ENCODE measurements at regions of chr4 and their contacts with region 1.

Region 1: DNA sequence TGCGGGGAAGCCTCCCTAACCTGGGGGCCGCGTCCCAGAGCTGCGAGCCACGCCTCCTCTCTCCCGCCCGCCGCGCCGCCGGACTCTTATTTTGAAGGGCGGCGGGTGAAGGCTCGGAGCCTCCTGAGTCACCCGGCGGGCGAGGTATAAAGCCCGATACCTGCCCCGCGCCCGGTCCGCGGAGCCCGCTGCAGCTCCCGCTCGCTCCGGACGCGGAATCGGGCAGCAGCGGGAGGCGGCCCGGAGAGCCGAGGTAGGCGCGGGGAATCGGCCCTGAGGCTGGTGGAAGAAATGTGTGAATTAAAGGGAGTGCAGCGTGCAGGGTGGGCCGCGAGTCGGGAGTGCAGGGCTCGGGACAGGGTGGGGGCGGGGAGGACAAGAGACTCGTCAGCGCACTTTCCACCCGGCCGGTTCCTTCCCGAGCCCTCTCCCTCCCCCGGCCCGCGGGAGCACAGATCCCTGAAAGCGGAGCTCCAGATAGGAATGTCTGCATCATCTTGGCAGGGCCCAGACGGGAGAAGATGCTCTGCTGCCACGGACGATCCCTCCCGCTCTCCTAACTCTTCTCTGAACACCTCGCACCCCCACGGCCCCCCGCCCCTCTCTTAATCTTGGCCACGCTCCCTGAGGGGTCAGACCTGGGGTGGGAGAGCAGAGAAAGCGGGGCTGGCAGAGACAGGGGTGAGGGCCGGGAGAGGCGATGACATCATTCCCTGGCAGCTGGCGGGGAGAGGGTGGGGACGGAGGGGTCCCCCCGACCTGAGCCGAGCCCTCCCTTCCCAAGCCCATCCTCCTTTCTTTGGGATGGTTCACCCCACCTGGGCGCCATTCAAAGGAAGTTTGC is 177.9 kb downstream of the CBR4 start:
- DNase-seq: peak in 8 of 9 donors; percentile 31 to 77 (median 44)
- ATAC-seq: peak; percentile 85
- H3K4me3 ChIP-seq: peak overlapping the region; percentile 45
- H3K4me3 Mint-ChIP-seq: peak overlapping the region; percentile 63 to 91 (median 84)
- H3K27ac ChIP-seq: no peak overlapping the region
- H3K27ac Mint-ChIP-seq: peak overlapping the region in 1 of 9 donors; percentile 66
- H3K4me1 ChIP-seq: peaks cover 0 to 5% of the 10 kb centered on the region in 2 donors
- H3K4me1 Mint-ChIP-seq: peaks cover 0 to 21% (median 13%) of the 10 kb centered on the region in 7 donors
- H3K27me3 ChIP-seq: peaks cover 0 to 15% of the 10 kb centered on the region in 2 donors
- H3K27me3 Mint-ChIP-seq: peaks cover 46 to 68% (median 60%) of the 10 kb centered on the region in 5 donors

Region 2: DNA sequence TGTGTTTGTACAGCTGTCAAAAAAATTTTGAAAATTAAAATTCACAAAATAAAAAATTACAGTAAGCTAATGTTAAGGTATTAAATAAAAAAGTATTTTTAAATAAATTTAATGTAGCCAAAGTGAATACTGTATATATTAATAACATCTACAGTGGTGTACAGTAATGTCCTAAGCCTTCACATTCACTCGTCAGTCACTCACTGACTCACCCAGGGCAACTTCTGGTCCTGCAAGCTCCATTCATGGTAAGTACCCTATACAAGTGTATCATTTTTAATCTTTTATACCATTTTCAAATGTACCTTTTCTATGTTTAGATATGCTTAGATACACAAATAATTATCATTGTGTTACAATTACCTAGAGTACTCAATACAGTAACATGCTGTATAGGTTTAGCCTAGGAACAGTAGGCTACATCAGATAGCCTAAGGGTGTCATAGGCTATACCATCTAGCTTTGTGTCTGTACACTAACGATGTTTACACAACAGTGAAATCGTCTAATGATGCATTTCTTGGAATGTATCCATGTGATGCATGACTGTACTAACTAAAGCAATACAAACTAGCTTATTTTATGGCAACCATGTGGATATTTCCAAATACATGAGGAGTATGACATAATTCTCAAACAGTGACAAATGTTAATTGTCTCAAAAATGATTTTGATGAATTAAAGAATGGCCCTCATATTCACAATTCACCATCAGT is 527.2 kb before region 1 on chr4:
- CTCF ChIA-PET with region 1: no interaction called
- POLR2A ChIA-PET with region 1: no interaction called
- intact Hi-C with region 1: loop called in 1 of 2 experiments (anchors 5 kb)
- DNase-seq: no peak
- ATAC-seq: no peak
- H3K4me3 ChIP-seq: no peak overlapping the region
- H3K4me3 Mint-ChIP-seq: no peak overlapping the region
- H3K27ac ChIP-seq: no peak overlapping the region
- H3K27ac Mint-ChIP-seq: no peak overlapping the region
- H3K4me1 ChIP-seq: peaks cover 0 to 7% of the 10 kb centered on the region in 2 donors
- H3K4me1 Mint-ChIP-seq: peaks cover 8 to 50% (median 34%) of the 10 kb centered on the region in 7 donors
- H3K27me3 ChIP-seq: no peaks in the 10 kb centered on the region
- H3K27me3 Mint-ChIP-seq: no peaks in the 10 kb centered on the region

Region 3: GRCh38 chr4:168710353-168710946 is 121.7 kb before region 1 on chr4:
- CTCF ChIA-PET with region 1: no interaction called
- POLR2A ChIA-PET with region 1: no interaction called
- intact Hi-C with region 1: loop called in 1 of 2 experiments (anchors 10 kb)
- DNase-seq: no peak
- ATAC-seq: no peak
- H3K4me3 ChIP-seq: no peak overlapping the region
- H3K4me3 Mint-ChIP-seq: no peak overlapping the region
- H3K27ac ChIP-seq: no peak overlapping the region
- H3K27ac Mint-ChIP-seq: no peak overlapping the region
- H3K4me1 ChIP-seq: no peaks in the 10 kb centered on the region
- H3K4me1 Mint-ChIP-seq: peaks cover 0 to 10% (median 4%) of the 10 kb centered on the region in 7 donors
- H3K27me3 ChIP-seq: no peaks in the 10 kb centered on the region
- H3K27me3 Mint-ChIP-seq: peaks cover 0 to 6% (median 5%) of the 10 kb centered on the region in 5 donors

Region 4: DNA sequence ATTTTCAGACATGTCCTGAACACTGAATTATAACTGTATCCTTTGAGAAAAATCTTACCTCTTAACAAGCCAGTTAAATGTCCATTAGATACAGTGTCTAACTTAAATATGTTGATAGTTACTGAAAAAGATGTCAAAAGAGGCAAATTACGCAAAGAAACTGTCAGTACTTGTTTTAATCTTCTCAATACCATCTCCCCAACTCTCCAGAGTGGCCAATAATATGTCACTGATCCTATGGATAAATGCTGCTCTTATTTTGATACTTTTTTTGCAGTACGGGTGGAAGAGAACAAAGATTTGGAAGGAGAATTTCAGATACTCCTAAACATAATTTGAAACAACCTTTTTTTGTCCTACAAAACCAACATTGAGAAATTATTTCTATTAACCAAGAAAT is 14.8 kb before region 1 on chr4:
- CTCF ChIA-PET with region 1: no interaction called
- POLR2A ChIA-PET with region 1: no interaction called
- intact Hi-C with region 1: loop called (anchors 1 kb)
- DNase-seq: no peak
- ATAC-seq: no peak
- H3K4me3 ChIP-seq: no peak overlapping the region
- H3K4me3 Mint-ChIP-seq: peak overlapping the region in 1 of 10 donors; percentile 68
- H3K27ac ChIP-seq: no peak overlapping the region
- H3K27ac Mint-ChIP-seq: no peak overlapping the region
- H3K4me1 ChIP-seq: no peaks in the 10 kb centered on the region
- H3K4me1 Mint-ChIP-seq: peaks cover 0 to 14% (median 5%) of the 10 kb centered on the region in 7 donors
- H3K27me3 ChIP-seq: no peaks in the 10 kb centered on the region
- H3K27me3 Mint-ChIP-seq: peaks cover 37 to 58% (median 48%) of the 10 kb centered on the region in 5 donors

Region 5: DNA sequence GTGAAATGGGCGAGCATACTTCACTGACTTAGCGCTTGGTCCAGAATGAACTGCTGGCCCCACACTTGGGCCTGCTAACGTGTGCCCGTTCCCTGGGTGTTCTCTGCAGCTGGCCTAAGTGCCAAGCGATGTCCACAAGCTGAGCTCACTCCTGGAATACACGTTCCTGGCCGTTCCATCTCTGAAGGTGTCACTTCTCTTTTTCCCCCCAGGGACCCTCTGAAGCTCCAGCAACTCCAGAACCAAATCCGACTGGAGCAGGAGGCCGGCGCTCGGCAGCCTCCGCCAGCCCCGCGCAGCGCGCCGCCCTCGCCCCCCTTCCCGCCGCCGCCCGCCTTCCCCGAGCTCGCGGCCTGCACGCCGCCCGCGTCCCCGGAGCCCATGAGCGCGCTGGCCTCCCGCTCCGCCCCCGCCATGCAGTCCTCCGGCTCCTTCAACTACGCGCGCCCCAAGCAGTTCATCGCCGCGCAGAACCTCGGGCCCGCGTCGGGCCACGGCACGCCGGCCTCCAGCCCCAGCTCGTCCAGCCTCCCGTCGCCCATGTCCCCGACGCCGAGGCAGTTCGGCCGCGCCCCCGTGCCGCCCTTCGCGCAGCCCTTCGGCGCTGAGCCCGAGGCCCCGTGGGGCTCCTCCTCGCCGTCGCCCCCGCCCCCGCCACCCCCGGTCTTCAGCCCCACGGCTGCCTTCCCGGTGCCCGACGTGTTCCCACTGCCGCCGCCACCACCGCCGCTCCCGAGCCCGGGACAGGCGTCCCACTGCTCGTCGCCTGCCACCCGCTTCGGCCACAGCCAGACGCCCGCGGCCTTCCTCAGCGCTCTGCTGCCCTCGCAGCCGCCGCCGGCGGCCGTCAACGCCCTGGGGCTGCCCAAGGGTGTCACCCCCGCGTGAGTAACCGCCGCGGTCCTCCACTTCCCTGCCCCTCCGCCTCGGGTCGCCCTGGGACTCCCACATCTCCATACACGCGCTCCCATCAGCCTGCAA is 45.7 kb after region 1 on chr4:
- CTCF ChIA-PET with region 1: no interaction called
- POLR2A ChIA-PET with region 1: no interaction called
- intact Hi-C with region 1: loop called in 1 of 2 experiments (anchors 5 kb)
- DNase-seq: peak in 6 of 9 donors; percentile 21 to 52 (median 26)
- ATAC-seq: peak; percentile 73
- H3K4me3 ChIP-seq: no peak overlapping the region
- H3K4me3 Mint-ChIP-seq: peak overlapping the region; percentile 67 to 93 (median 83)
- H3K27ac ChIP-seq: no peak overlapping the region
- H3K27ac Mint-ChIP-seq: peak overlapping the region in 6 of 9 donors; percentile 29 to 80 (median 60)
- H3K4me1 ChIP-seq: no peaks in the 10 kb centered on the region
- H3K4me1 Mint-ChIP-seq: peaks cover 5 to 28% (median 12%) of the 10 kb centered on the region in 7 donors
- H3K27me3 ChIP-seq: peaks cover 0 to 3% of the 10 kb centered on the region in 2 donors
- H3K27me3 Mint-ChIP-seq: peaks cover 59 to 81% (median 61%) of the 10 kb centered on the region in 5 donors

Region 6: DNA sequence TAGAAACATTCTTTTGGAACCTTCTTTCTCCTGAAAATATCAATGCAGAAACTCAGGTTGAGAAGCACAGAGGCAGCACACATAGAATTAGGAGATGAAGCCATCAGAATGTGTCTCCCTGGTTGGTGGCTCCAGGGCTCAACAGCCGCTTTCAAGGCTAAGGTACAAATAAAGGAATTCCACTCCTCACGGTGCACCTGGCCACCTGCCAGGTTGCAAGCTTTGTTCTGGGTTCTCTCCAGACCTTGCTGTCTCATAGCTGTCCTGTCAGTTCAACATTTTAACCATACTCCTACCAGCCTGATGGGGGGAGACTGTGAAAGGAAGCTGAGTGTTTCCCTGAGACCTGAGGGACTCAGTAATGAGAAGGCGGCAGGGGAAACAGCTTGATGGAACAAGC is 1021.9 kb after region 1 on chr4:
- CTCF ChIA-PET with region 1: no interaction called
- POLR2A ChIA-PET with region 1: no interaction called
- intact Hi-C with region 1: no loop called
- DNase-seq: no peak
- ATAC-seq: no peak
- H3K4me3 ChIP-seq: no peak overlapping the region
- H3K4me3 Mint-ChIP-seq: no peak overlapping the region
- H3K27ac ChIP-seq: no peak overlapping the region
- H3K27ac Mint-ChIP-seq: no peak overlapping the region
- H3K4me1 ChIP-seq: no peaks in the 10 kb centered on the region
- H3K4me1 Mint-ChIP-seq: no peaks in the 10 kb centered on the region
- H3K27me3 ChIP-seq: no peaks in the 10 kb centered on the region
- H3K27me3 Mint-ChIP-seq: peaks cover 3 to 12% (median 9%) of the 10 kb centered on the region in 5 donors

Region 7: GRCh38 chr4:170027181-170027829 is 1195.2 kb after region 1 on chr4:
- CTCF ChIA-PET with region 1: no interaction called
- POLR2A ChIA-PET with region 1: no interaction called
- intact Hi-C with region 1: loop called in 1 of 2 experiments (anchors 5 kb)
- DNase-seq: peak; percentile 76 to 92 (median 89)
- ATAC-seq: peak; percentile 83
- H3K4me3 ChIP-seq: peak overlapping the region; percentile 71
- H3K4me3 Mint-ChIP-seq: peak overlapping the region; percentile 86 to 96 (median 94)
- H3K27ac ChIP-seq: peak overlapping the region; percentile 59
- H3K27ac Mint-ChIP-seq: peak overlapping the region; percentile 65 to 89 (median 81)
- H3K4me1 ChIP-seq: peaks cover 0 to 7% of the 10 kb centered on the region in 2 donors
- H3K4me1 Mint-ChIP-seq: peaks cover 6 to 14% (median 11%) of the 10 kb centered on the region in 7 donors
- H3K27me3 ChIP-seq: no peaks in the 10 kb centered on the region
- H3K27me3 Mint-ChIP-seq: peaks cover 0 to 60% (median 8%) of the 10 kb centered on the region in 5 donors

Measured in naive thymus-derived CD4-positive, alpha-beta T cell (primary cell).